CD4-positive, alpha-beta T cell (primary cell): ENCODE measurements at regions of chr6 and their contacts with region 1.

Region 1: DNA sequence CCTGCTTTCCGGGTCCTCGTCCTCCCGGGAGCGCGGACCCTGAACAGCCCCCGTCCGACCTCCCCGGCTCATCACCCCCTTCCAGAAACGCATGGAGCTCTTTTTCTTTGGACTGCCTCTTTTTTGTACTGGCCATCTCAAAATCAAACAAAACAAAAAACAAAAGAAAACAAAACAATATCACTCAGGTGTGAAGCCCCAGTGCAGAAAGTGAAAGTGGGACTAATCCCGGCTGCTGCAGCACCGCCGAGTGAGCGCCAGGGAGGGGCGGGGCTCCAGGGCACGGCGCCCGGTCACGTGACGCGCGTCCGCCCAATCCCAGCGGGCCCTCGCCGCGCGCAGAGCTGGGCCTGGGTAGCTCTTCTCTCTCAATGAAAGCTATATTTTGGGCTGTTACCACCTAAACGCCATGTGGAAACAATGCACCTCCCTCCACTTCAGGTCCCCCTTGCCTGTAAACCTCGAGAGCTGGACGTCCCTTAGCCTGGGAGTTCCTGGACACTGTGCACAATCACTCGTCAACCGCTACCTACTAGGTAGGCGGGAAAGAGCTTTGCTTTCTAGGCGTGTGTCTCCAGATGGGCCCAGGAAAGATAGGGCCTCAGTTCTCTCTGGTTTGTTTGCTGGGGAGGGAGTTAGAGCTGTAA is 93.7 kb upstream of the PRDM1 start:
- DNase-seq: peak; percentile 76 to 96 (median 86)
- ATAC-seq: peak; percentile 89
- H3K4me3 ChIP-seq: peak overlapping the region; percentile 86
- H3K4me3 Mint-ChIP-seq: peak overlapping the region; percentile 92
- H3K27ac ChIP-seq: peak overlapping the region; percentile 66 to 71
- H3K27ac Mint-ChIP-seq: peak overlapping the region; percentile 83
- H3K4me1 ChIP-seq: peaks cover 41% of the 10 kb centered on the region
- H3K4me1 Mint-ChIP-seq: peaks cover 37% of the 10 kb centered on the region
- H3K27me3 ChIP-seq: peaks cover 14 to 54% of the 10 kb centered on the region in 2 experiments
- H3K27me3 Mint-ChIP-seq: peaks cover 87% of the 10 kb centered on the region
- CTCF ChIP-seq: no peak

Region 2: DNA sequence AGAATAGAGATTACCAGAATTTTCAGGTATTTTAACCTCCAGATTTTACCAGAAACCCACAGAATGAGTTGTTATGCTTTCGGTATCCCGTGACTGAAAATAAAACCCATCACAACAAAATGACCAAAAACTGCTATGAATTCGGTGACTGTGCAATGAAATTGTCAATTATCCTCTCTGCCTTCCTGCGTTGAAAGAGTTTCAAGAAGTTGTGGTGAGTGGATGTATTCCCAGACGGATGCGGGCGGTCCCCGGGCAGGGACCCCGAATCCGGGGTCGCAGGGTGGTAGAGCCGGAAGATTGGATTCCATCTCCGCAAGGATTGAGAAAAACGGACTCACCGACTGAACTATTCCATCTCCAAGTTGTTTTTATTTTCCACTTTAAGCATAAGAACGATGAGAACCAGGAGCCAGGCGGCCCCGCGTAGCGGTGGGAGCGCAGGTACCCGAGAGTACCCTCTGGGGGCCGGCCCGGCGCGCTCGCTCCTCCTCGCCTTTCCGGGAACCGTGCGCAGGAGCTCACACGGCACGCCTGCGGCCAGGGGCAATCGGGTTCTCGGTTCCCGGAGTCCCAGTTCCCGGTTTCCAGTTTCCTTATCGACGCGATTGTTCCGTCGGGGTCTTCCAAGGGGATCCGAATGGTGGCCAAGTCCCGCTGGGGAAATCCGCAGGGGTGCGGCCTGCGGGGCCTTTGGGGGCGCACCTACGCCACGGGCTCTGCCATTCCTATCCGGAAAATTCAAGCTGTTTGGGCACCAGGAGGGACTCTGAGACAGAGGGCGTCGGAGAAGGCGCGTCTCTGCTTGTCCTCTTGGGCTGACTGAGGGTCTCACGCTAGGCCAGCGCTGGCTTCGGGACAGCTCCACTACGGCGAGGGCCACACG is 11.2 kb before region 1 on chr6:
- CTCF ChIA-PET with region 1: interaction called, 6 read pairs
- POLR2A ChIA-PET with region 1: interaction called, 48 read pairs
- intact Hi-C with region 1: loop called in 1 of 2 experiments (anchors 2 kb)
- DNase-seq: peak in 11 of 14 experiments; percentile 15 to 61 (median 31)
- ATAC-seq: peak; percentile 85
- H3K4me3 ChIP-seq: peak overlapping the region; percentile 62
- H3K4me3 Mint-ChIP-seq: peak overlapping the region; percentile 84
- H3K27ac ChIP-seq: no peak overlapping the region
- H3K27ac Mint-ChIP-seq: no peak overlapping the region
- H3K4me1 ChIP-seq: peaks cover 20% of the 10 kb centered on the region
- H3K4me1 Mint-ChIP-seq: peaks cover 36% of the 10 kb centered on the region
- H3K27me3 ChIP-seq: peaks cover 35 to 38% of the 10 kb centered on the region in 2 experiments
- H3K27me3 Mint-ChIP-seq: peaks cover 70% of the 10 kb centered on the region
- CTCF ChIP-seq: no peak

Region 3: DNA sequence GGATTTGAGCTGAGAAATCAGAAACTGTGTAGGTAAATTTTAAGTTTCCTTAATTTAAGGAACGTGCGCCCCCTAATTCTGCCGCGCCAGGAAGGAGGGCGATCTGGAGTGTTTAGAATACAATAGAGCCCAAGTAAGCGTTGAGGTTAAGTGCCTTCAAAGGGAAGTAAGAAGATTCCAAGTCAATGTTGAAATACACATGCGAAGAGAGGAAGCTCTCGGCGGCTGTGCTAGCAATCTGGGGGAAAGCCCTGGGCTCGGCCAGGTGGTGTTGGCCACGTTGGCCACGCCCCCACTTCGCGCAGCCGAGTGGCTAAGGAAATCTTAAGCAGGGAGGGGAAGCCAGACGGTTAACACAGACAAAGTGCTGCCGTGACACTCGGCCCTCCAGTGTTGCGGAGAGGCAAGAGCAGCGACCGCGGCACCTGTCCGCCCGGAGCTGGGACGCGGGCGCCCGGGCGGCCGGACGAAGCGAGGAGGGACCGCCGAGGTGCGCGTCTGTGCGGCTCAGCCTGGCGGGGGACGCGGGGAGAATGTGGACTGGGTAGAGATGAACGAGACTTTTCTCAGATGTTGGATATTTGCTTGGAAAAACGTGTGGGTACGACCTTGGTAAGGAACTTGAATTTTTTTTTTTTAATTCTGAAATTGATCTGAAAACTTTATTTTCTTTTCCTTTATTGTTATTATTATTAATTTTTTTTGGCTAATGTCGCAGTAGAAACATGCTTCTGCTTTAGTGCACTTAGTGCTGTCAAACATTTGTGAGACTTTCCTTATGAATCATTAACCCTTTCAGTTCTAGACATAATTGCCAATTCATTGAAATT is 93.8 kb after region 1 on chr6 and contains the start of gene PRDM1:
- CTCF ChIA-PET with region 1: interaction called, 12 read pairs
- POLR2A ChIA-PET with region 1: interaction called, 14 read pairs
- intact Hi-C with region 1: loop called (anchors 2 kb)
- DNase-seq: peak; percentile 53 to 96 (median 68)
- ATAC-seq: peak; percentile 83
- H3K4me3 ChIP-seq: peak within 1 kb of the TSS; percentile 62
- H3K4me3 Mint-ChIP-seq: peak within 1 kb of the TSS; percentile 94
- H3K27ac ChIP-seq: peak within 1 kb of the TSS in 1 of 2 donors; percentile 49
- H3K27ac Mint-ChIP-seq: peak within 1 kb of the TSS; percentile 74
- H3K4me1 ChIP-seq: peaks cover 58% of the 10 kb centered on the region
- H3K4me1 Mint-ChIP-seq: peaks cover 80% of the 10 kb centered on the region
- H3K27me3 ChIP-seq: peaks cover 0 to 8% of the 10 kb centered on the region in 2 experiments
- H3K27me3 Mint-ChIP-seq: peaks cover 55% of the 10 kb centered on the region
- CTCF ChIP-seq: peak; percentile 14
- total RNA-seq, gene PRDM1: 69.9 to 83.4 TPM

Region 4: DNA sequence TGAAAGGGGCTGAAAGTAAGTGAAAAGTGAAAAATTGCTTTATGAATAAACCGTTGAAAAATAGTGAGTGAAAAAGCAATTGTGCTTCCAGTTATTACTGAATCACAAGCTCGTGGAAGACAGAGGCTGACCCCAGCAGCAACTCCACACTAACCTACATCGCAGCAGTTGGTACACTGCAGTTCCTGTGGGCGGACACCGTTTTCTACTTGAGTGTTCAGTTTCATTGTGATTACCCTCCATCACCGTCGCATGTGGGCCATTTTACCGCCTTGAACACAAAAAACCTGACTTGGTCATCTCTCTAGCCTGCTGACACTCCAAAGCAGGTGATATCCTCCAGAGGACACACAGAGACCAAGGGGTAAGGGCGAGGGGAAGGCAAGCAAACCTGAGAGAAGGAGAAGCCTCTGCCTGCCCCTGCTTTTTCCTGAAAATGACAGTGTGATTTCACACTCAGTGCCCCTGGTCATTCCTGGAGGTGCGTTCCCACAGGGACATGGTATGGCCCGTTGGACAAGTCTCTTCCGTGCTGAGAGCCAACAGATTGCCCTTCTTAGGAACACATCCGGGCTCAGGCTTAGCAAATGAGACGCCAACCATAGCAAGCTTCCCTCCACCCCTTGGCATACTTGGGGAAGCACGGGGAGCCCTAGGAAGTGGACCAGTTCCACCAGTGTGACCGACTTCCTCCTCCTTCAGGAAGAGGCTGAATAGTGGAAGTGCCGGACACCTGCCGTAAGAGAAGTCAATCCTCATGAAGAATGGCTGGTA is 122.2 kb after region 1 on chr6:
- CTCF ChIA-PET with region 1: interaction called, 6 read pairs
- POLR2A ChIA-PET with region 1: interaction called, 24 read pairs
- intact Hi-C with region 1: loop called in 1 of 2 experiments (anchors 2 kb)
- DNase-seq: peak in 4 of 14 experiments; percentile 45 to 65 (median 60)
- ATAC-seq: no peak
- H3K4me3 ChIP-seq: peak overlapping the region; percentile 28
- H3K4me3 Mint-ChIP-seq: peak overlapping the region; percentile 64
- H3K27ac ChIP-seq: no peak overlapping the region
- H3K27ac Mint-ChIP-seq: peak overlapping the region; percentile 80
- H3K4me1 ChIP-seq: peaks cover 70% of the 10 kb centered on the region
- H3K4me1 Mint-ChIP-seq: peaks cover 85% of the 10 kb centered on the region
- H3K27me3 ChIP-seq: no peaks in the 10 kb centered on the region
- H3K27me3 Mint-ChIP-seq: peaks cover 5% of the 10 kb centered on the region
- CTCF ChIP-seq: no peak

Region 5: GRCh38 chr6:106194949-106195921 is 202.8 kb after region 1 on chr6:
- CTCF ChIA-PET with region 1: no interaction called
- POLR2A ChIA-PET with region 1: interaction called, 6 read pairs
- intact Hi-C with region 1: loop called in 1 of 2 experiments (anchors 2 kb)
- DNase-seq: peak in 6 of 14 experiments; percentile 5 to 85 (median 54)
- ATAC-seq: peak; percentile 78
- H3K4me3 ChIP-seq: peak overlapping the region; percentile 13
- H3K4me3 Mint-ChIP-seq: peak overlapping the region; percentile 76
- H3K27ac ChIP-seq: peak overlapping the region in 1 of 2 donors; percentile 12
- H3K27ac Mint-ChIP-seq: peak overlapping the region; percentile 81
- H3K4me1 ChIP-seq: peaks cover 19% of the 10 kb centered on the region
- H3K4me1 Mint-ChIP-seq: peaks cover 41% of the 10 kb centered on the region
- H3K27me3 ChIP-seq: no peaks in the 10 kb centered on the region
- H3K27me3 Mint-ChIP-seq: no peaks in the 10 kb centered on the region
- CTCF ChIP-seq: no peak

Region 6: GRCh38 chr6:106539936-106540335 is 547.5 kb after region 1 on chr6:
- CTCF ChIA-PET with region 1: no interaction called
- POLR2A ChIA-PET with region 1: no interaction called
- intact Hi-C with region 1: loop called in 1 of 2 experiments (anchors 10 kb)
- DNase-seq: no peak
- ATAC-seq: no peak
- H3K4me3 ChIP-seq: no peak overlapping the region
- H3K4me3 Mint-ChIP-seq: no peak overlapping the region
- H3K27ac ChIP-seq: no peak overlapping the region
- H3K27ac Mint-ChIP-seq: peak overlapping the region; percentile 66
- H3K4me1 ChIP-seq: peaks cover 14% of the 10 kb centered on the region
- H3K4me1 Mint-ChIP-seq: peaks cover 59% of the 10 kb centered on the region
- H3K27me3 ChIP-seq: no peaks in the 10 kb centered on the region
- H3K27me3 Mint-ChIP-seq: no peaks in the 10 kb centered on the region
- CTCF ChIP-seq: no peak

Region 7: GRCh38 chr6:106574741-106575458 is 582.5 kb after region 1 on chr6:
- CTCF ChIA-PET with region 1: no interaction called
- POLR2A ChIA-PET with region 1: no interaction called
- intact Hi-C with region 1: no loop called
- DNase-seq: no peak
- ATAC-seq: no peak
- H3K4me3 ChIP-seq: no peak overlapping the region
- H3K4me3 Mint-ChIP-seq: no peak overlapping the region
- H3K27ac ChIP-seq: no peak overlapping the region
- H3K27ac Mint-ChIP-seq: no peak overlapping the region
- H3K4me1 ChIP-seq: no peaks in the 10 kb centered on the region
- H3K4me1 Mint-ChIP-seq: no peaks in the 10 kb centered on the region
- H3K27me3 ChIP-seq: no peaks in the 10 kb centered on the region
- H3K27me3 Mint-ChIP-seq: no peaks in the 10 kb centered on the region
- CTCF ChIP-seq: no peak